Activated CD4-positive, alpha-beta T cell treated with anti-CD3 and anti-CD28 coated beads for 36 hours (primary cell): ENCODE measurements at regions of chr9 and their contacts with region 1.

Region 1: DNA sequence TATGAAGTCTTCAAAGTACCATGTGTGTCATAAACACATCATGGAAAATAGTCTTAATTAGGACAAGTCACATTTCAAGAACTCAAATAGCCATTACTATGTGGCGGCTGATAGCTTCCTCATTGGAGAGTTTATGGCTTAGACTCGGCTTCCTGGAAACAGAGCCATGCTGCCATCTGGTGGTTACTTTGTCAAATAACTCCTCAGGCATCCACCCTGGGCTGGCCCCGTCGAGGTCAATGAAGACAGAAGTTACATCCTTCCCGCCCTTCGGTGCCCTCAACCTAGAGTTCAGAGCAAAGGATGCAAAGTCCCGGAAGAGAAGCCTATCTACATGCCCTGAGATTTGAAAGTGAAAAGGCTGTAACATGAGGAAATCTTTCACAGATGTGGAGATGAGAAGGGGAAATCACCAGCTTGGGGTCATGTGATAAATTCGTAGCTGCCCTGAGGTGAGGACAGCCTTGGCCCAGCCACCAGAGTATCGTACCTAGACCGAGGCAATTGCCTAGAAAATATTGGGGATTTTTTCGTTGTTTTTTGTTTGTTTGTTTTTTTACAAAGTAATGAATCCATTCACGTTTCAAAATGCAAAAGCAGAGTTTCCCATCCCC is 45.5 kb upstream of the ZNF169 start:
- DNase-seq: peak; percentile 84
- ATAC-seq: peak; percentile 99
- H3K4me3 Mint-ChIP-seq: peak overlapping the region; percentile 26
- H3K27ac Mint-ChIP-seq: peak overlapping the region; percentile 55
- H3K4me1 Mint-ChIP-seq: peaks cover 3% of the 10 kb centered on the region
- H3K27me3 Mint-ChIP-seq: peaks cover 13% of the 10 kb centered on the region

Region 2: GRCh38 chr9:93682232-93682968 is 531.2 kb before region 1 on chr9:
- CTCF ChIA-PET with region 1: interaction called, 3 read pairs
- POLR2A ChIA-PET with region 1: no interaction called
- intact Hi-C with region 1: loop called in 1 of 2 experiments (anchors 2 kb)
- DNase-seq: peak; percentile 81
- ATAC-seq: peak; percentile 73
- H3K4me3 Mint-ChIP-seq: no peak overlapping the region
- H3K27ac Mint-ChIP-seq: peak overlapping the region; percentile 37
- H3K4me1 Mint-ChIP-seq: no peaks in the 10 kb centered on the region
- H3K27me3 Mint-ChIP-seq: no peaks in the 10 kb centered on the region

Region 3: GRCh38 chr9:93962561-93963440 is 250.8 kb before region 1 on chr9:
- CTCF ChIA-PET with region 1: no interaction called
- POLR2A ChIA-PET with region 1: no interaction called
- intact Hi-C with region 1: loop called in 1 of 2 experiments (anchors 1 kb)
- DNase-seq: peak; percentile 90
- ATAC-seq: peak; percentile 76
- H3K4me3 Mint-ChIP-seq: no peak overlapping the region
- H3K27ac Mint-ChIP-seq: peak overlapping the region; percentile 65
- H3K4me1 Mint-ChIP-seq: peaks cover 26% of the 10 kb centered on the region
- H3K27me3 Mint-ChIP-seq: peaks cover 39% of the 10 kb centered on the region

Region 4: DNA sequence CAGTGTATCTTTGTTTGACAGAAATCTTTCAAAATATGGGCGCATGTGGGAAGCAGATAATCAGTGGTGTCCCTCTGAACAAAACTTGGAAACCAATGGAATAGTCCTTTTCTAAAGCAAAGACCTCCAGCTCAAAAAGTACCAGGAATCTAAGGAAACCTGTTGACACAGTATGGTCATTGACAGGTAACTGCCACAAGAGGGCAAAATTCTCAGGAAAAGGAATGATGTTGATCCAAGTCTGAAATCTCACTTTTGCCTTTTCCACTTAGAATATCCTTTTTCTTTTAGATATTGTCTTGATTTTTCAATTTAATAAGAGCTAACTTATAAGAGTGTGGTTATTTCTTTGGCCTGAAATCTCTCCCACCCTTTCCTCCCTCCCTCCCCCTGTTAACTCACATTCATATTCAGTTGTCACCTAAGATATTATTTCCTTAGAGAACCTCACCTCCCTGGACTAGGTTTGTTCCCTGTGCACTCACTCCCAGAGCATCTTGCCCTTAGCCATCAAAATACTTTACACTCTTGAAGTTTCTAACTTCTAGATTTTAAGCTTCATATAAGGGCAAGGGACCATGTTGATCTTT is 199.5 kb before region 1 on chr9:
- CTCF ChIA-PET with region 1: interaction called, 50 read pairs
- POLR2A ChIA-PET with region 1: no interaction called
- intact Hi-C with region 1: loop called (anchors 1 kb)
- DNase-seq: no peak
- ATAC-seq: no peak
- H3K4me3 Mint-ChIP-seq: no peak overlapping the region
- H3K27ac Mint-ChIP-seq: no peak overlapping the region
- H3K4me1 Mint-ChIP-seq: peaks cover 18% of the 10 kb centered on the region
- H3K27me3 Mint-ChIP-seq: no peaks in the 10 kb centered on the region

Region 5: DNA sequence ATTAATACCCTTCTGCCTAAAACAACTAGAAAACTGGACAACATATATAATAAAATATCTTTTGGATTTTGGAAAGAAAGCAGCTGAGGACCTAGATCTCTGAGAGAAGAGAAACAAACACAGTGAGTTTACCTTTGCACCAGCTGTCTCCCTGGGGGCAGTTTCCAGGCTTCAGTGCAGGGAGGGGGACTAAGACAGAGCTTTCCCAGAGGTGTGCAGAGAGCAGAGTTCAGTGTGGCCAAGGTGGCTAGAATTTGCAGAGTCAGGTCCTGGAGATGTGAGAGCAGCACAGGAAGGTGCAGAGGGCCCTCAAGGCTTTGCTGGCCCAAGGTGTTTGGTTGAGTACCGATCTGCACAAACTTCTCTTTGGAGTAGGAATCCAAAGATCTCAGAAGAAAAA is 155.7 kb before region 1 on chr9:
- CTCF ChIA-PET with region 1: interaction called, 175 read pairs
- POLR2A ChIA-PET with region 1: no interaction called
- intact Hi-C with region 1: no loop called
- DNase-seq: no peak
- ATAC-seq: no peak
- H3K4me3 Mint-ChIP-seq: no peak overlapping the region
- H3K27ac Mint-ChIP-seq: no peak overlapping the region
- H3K4me1 Mint-ChIP-seq: no peaks in the 10 kb centered on the region
- H3K27me3 Mint-ChIP-seq: no peaks in the 10 kb centered on the region

Region 6: DNA sequence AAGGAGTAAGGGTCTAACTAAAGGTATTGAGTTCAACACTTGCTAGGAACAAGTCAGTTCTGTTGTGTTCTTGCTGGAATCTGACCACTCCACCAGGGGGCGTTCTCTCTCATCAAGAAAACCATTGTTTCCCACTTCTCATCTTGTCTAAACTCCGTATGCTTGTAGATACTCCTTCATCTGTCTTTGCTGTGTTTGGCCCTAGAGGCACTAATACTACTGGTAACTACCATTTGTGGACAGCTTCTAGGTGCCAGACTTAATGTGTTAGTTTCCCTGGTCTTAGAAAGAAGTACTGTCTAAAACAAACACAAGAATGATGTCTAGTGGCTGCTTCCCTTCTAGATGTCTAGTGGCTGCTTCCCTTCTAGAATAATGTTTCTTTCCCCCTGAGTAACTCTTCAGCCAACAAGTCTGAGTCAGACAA is 148.1 kb before region 1 on chr9:
- CTCF ChIA-PET with region 1: interaction called, 175 read pairs
- POLR2A ChIA-PET with region 1: no interaction called
- intact Hi-C with region 1: loop called (anchors 1 kb)
- DNase-seq: peak; percentile 84
- ATAC-seq: peak; percentile 75
- H3K4me3 Mint-ChIP-seq: no peak overlapping the region
- H3K27ac Mint-ChIP-seq: no peak overlapping the region
- H3K4me1 Mint-ChIP-seq: peaks cover 4% of the 10 kb centered on the region
- H3K27me3 Mint-ChIP-seq: no peaks in the 10 kb centered on the region

Region 7: GRCh38 chr9:94081864-94082463 is 131.7 kb before region 1 on chr9:
- CTCF ChIA-PET with region 1: interaction called, 10 read pairs
- POLR2A ChIA-PET with region 1: no interaction called
- intact Hi-C with region 1: no loop called
- DNase-seq: no peak
- ATAC-seq: no peak
- H3K4me3 Mint-ChIP-seq: no peak overlapping the region
- H3K27ac Mint-ChIP-seq: no peak overlapping the region
- H3K4me1 Mint-ChIP-seq: peaks cover 2% of the 10 kb centered on the region
- H3K27me3 Mint-ChIP-seq: no peaks in the 10 kb centered on the region